Calu3 (cell line): ENCODE measurements at regions of chr9 and their contacts with region 1.

Region 1: GRCh38 chr9:104780799-104781395 is 17.0 kb downstream of the NIPSNAP3B start:
- DNase-seq: peak; percentile 13
- H3K4me3 Mint-ChIP-seq: no peak overlapping the region
- H3K27ac Mint-ChIP-seq: no peak overlapping the region
- H3K4me1 Mint-ChIP-seq: no peaks in the 10 kb centered on the region
- H3K27me3 Mint-ChIP-seq: peaks cover 10% of the 10 kb centered on the region
- CTCF ChIP-seq: peak; percentile 20

Region 2: GRCh38 chr9:104863180-104863883 is 82.4 kb after region 1 on chr9:
- CTCF ChIA-PET with region 1: interaction called, 3 read pairs
- intact Hi-C with region 1: loop called (anchors 2 kb)
- DNase-seq: peak; percentile 44
- H3K4me3 Mint-ChIP-seq: no peak overlapping the region
- H3K27ac Mint-ChIP-seq: no peak overlapping the region
- H3K4me1 Mint-ChIP-seq: peaks cover 13% of the 10 kb centered on the region
- H3K27me3 Mint-ChIP-seq: no peaks in the 10 kb centered on the region
- CTCF ChIP-seq: peak; percentile 32